ENCODE measurements at regions of chr6 and their contacts with region 1.

Region 1: DNA sequence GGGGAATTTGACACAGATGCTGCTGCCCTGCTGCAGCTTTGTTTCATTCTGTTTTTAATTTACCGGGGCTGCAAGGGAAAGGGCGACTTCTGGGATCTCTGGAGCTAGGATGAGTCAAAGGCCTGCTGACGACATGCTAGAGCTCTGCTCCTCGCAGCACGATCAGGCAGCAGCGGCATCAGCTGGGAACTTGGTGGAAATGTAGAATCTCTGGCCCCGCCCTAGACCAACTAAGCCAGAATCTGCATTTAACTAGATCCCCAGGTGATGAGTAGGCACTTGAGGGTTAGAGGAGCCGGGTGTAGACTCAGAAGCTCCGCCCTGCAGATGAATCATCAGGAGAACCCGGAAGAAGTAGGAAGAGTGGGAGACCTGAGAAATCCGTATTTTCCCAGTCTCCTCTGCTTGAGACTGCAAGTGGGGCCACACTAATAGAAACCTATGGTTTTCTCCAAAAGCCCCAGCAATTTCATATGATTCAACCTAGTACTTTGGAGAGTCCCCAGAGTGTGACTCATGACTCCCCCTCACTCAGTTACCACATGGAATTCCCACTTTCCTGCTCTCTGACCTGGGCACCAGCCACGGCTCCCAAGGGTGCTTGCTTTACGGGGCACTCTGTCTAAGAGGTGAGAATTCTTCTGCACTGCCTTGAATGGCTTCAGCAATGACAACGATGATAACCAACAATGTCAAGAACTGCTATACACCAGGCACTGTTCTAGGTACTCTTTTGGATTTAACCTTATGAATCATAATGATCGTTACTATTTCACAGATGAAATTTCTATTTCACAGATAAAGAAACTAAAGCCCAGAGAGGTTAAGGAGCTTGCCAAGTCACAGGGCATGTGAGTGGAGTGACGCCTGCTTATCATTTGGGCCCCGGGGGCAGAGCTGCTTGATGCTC is 18.1 kb downstream of the TUBB2B start:
- DNase-seq: peak; percentile 69 to 87
- H3K4me3 ChIP-seq: peak overlapping the region in 1 of 4 experiments; percentile 39; a peak in 2 of 8 replicates
- H3K27ac ChIP-seq: 0 out of 2 replicates have a peak overlapping the region, but pooled peaks have one; percentile 9
- H3K4me1 ChIP-seq: peaks cover 3 to 10% (median 4%) of the 10 kb centered on the region in 4 experiments; a peak in 6 of 7 replicates
- H3K27me3 ChIP-seq: no peaks in the 10 kb centered on the region
- CTCF ChIP-seq: peak in 2 of 3 experiments; percentile 19 to 24; a peak in 2 of 4 replicates
- EP300 ChIP-seq: no peak
- POLR2A ChIP-seq: peak; percentile 38 to 62; a peak in 2 of 3 replicates
- RAD21 ChIP-seq: peak; percentile 46 to 58; a peak in 3 of 4 replicates

Region 2: DNA sequence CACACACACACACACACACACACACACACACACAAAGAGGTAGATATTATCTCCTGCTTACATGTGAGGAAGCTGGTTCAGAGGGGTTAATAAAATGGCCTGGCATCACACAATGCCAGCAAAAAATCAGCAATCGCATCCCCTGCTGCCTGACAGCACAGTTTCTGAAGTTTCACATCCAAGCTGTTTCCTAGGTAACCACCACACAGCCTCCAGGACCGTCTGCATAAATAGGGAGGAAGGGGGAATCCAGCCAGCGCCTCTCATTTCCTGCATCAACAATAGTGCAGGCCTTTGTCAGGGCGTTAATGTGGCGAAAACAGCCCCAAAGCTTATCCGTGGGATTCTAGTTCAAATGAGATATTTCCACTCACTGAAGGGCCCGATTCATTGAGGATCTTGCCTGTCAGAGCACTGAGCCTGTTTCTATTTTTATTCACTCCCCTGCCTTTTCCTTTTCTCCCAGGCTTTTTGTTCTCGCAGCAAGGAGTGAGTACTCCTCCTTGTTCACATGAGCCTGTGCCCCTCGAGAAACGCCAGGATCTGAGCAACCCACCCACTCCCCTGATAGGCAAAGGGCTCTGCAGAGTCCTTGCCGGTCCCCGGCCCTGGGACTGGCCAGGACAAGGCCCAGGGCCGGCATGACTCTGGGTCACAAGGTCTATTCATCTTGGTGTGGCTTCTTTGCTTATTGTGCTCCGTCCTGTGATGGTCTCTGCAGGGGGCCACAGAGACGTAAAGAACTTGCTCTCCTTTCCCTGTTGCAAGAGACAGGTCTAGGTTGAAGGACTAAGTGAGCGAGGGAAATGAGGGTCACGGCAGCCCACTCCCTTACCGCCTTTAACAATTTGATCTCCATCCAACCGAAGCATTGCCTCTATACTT is 14.6 kb before region 1 on chr6:
- CTCF ChIA-PET with region 1: interaction called, 25 read pairs
- POLR2A ChIA-PET with region 1: interaction called, 12 read pairs
- DNase-seq: peak in 1 of 2 experiments; percentile 62
- H3K4me3 ChIP-seq: peak overlapping the region in 1 of 4 experiments; percentile 28; a peak in 1 of 8 replicates
- H3K27ac ChIP-seq: peak overlapping the region; percentile 68
- H3K4me1 ChIP-seq: peaks cover 15 to 24% (median 20%) of the 10 kb centered on the region in 4 experiments
- H3K27me3 ChIP-seq: no peaks in the 10 kb centered on the region
- CTCF ChIP-seq: no peak
- EP300 ChIP-seq: no peak
- POLR2A ChIP-seq: no peak
- RAD21 ChIP-seq: no peak

Region 3: GRCh38 chr6:3239110-3239830 is 29.9 kb after region 1 on chr6:
- CTCF ChIA-PET with region 1: interaction called, 12 read pairs
- POLR2A ChIA-PET with region 1: no interaction called
- DNase-seq: no peak
- H3K4me3 ChIP-seq: no peak overlapping the region
- H3K27ac ChIP-seq: no peak overlapping the region
- H3K4me1 ChIP-seq: peaks cover 0 to 5% (median 0%) of the 10 kb centered on the region in 4 experiments; a peak in 3 of 7 replicates
- H3K27me3 ChIP-seq: no peaks in the 10 kb centered on the region
- CTCF ChIP-seq: peak; percentile 43 to 68 (median 57)
- EP300 ChIP-seq: no peak
- POLR2A ChIP-seq: no peak
- RAD21 ChIP-seq: peak; percentile 47 to 67